H1 (cell line): ENCODE measurements at regions of chr15 and their contacts with region 1.

Region 1: GRCh38 chr15:90716976-90717821 is at the start of gene BLM:
- DNase-seq: peak; percentile 91 to 92
- H3K4me3 ChIP-seq: peak within 1 kb of the TSS; percentile 63 to 98 (median 86)
- H3K27ac ChIP-seq: peak within 1 kb of the TSS; percentile 86
- H3K4me1 ChIP-seq: peaks cover 0 to 3% (median 2%) of the 10 kb centered on the region in 4 experiments; a peak in 4 of 7 replicates
- H3K27me3 ChIP-seq: no peaks in the 10 kb centered on the region
- CTCF ChIP-seq: peak; percentile 7 to 42 (median 22); a peak in 3 of 4 replicates
- EP300 ChIP-seq: no peak
- POLR2A ChIP-seq: peak; percentile 90 to 97
- RAD21 ChIP-seq: no peak
- total RNA-seq, gene BLM: 45.6 and 46.7 TPM in 2 replicates

Region 2: DNA sequence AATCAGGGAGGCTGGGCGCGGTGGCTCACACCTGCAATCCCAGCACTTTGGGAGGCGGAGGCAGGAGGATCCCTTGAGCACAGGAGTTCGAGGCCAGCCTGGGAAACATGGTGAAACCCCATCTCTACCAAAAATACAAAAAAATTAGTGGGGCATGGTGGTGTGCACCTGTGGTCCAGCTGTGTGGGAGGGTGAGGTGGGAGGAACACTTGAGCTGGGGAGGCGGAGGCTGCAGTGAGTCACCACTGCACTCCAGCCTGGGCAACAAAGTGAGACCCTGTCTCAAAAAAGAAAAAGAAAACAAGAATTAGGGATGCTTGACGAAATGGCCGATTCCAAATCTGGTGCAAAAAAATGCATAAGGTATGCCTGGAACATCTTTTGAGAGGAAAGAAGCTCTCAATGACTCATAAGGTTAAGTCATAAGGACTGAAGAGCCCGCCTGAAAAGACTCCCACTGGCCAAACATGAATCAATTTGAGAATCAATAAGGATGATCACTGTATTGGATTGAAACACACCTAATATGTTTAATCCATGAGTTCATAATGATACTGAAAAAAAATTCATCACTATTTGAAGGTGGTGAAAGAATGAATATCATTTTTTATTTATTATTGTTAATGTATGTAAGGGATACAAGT is 27.7 kb after region 1 on chr15:
- CTCF ChIA-PET with region 1: interaction called, 4 read pairs
- POLR2A ChIA-PET with region 1: interaction called, 10 read pairs
- DNase-seq: no peak
- H3K4me3 ChIP-seq: no peak overlapping the region
- H3K27ac ChIP-seq: no peak overlapping the region
- H3K4me1 ChIP-seq: no peaks in the 10 kb centered on the region
- H3K27me3 ChIP-seq: no peaks in the 10 kb centered on the region
- CTCF ChIP-seq: no peak
- EP300 ChIP-seq: no peak
- POLR2A ChIP-seq: no peak
- RAD21 ChIP-seq: no peak

Region 3: GRCh38 chr15:90762109-90762508 is 44.9 kb after region 1 on chr15:
- CTCF ChIA-PET with region 1: no interaction called
- POLR2A ChIA-PET with region 1: no interaction called
- DNase-seq: no peak
- H3K4me3 ChIP-seq: peak overlapping the region in 1 of 4 experiments; percentile 19; a peak in 1 of 8 replicates
- H3K27ac ChIP-seq: no peak overlapping the region
- H3K4me1 ChIP-seq: peaks cover 0 to 4% (median 4%) of the 10 kb centered on the region in 4 experiments; a peak in 3 of 7 replicates
- H3K27me3 ChIP-seq: no peaks in the 10 kb centered on the region
- CTCF ChIP-seq: no peak
- EP300 ChIP-seq: no peak
- POLR2A ChIP-seq: no peak
- RAD21 ChIP-seq: no peak